ENCODE measurements at regions of chr11 and their contacts with region 1.

Region 1: GRCh38 chr11:129853518-129854236 is 38.0 kb downstream of the TMEM45B start:
- DNase-seq: peak; percentile 37 to 92 (median 82)
- ATAC-seq: peak; percentile 92 to 95
- H3K4me3 Mint-ChIP-seq: peak overlapping the region in 9 of 10 donors; percentile 64 to 82 (median 75)
- H3K27ac Mint-ChIP-seq: peak overlapping the region; percentile 63 to 99 (median 96)
- H3K4me1 Mint-ChIP-seq: peaks cover 17 to 37% (median 32%) of the 10 kb centered on the region in 4 donors
- H3K27me3 Mint-ChIP-seq: no peaks in the 10 kb centered on the region

Region 2: GRCh38 chr11:129803533-129803932 is 50.1 kb before region 1 on chr11:
- POLR2A ChIA-PET with region 1: interaction called, 29 read pairs
- DNase-seq: no peak
- ATAC-seq: no peak
- H3K4me3 Mint-ChIP-seq: peak overlapping the region; percentile 29 to 77 (median 70)
- H3K27ac Mint-ChIP-seq: peak overlapping the region; percentile 73 to 91 (median 82)
- H3K4me1 Mint-ChIP-seq: peaks cover 34 to 56% (median 45%) of the 10 kb centered on the region in 4 donors
- H3K27me3 Mint-ChIP-seq: peaks cover 0 to 10% (median 1%) of the 10 kb centered on the region in 5 donors

Region 3: DNA sequence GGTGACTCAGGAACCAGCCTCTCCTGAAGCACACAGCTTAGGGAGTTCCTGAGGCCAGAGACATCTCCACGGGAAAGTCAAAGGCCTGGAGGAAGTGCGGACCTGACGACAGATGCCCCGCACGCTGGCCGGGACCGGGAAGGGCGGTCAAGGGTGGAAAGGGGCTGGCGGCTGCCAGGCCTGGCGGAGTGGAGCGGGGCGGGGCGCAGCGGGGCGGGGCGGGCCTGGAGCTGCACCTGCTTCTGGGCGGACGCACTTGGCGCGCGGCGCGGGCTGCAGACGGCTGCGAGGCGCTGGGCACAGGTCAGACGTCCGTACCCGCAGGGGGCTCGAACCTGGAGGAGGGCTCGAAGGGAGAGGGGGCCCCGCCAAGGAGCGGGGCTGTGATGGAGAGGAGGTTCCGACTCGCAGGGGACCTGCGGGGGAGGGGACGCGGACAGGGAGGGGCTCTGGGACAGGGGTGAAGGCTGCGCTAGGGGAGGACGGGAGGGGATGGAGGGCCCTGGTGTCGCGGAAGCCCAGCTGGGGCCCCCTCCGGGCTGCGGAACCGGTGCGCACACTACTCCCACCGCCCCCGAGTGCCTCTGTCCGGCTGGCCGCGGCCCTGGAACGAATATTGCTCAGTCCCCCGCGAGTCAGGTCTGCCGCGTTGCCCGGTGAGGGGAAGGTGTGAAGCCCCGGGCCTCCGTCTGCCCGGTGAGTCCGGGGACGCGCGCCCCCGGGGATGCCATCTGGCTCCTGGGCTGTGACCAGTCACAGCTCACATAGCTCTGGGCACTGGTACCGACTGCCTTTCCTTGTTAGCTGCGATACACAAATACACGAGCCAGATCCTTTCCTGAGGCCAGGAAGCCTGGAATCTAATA is 37.8 kb before region 1 on chr11 and contains the start of gene TMEM45B:
- POLR2A ChIA-PET with region 1: interaction called, 26 read pairs
- DNase-seq: peak in 8 of 10 donors; percentile 15 to 66 (median 24)
- ATAC-seq: peak; percentile 17 to 49
- H3K4me3 Mint-ChIP-seq: peak within 1 kb of the TSS; percentile 75 to 90 (median 82)
- H3K27ac Mint-ChIP-seq: peak within 1 kb of the TSS; percentile 78 to 96 (median 90)
- H3K4me1 Mint-ChIP-seq: peaks cover 14 to 54% (median 42%) of the 10 kb centered on the region in 4 donors
- H3K27me3 Mint-ChIP-seq: peaks cover 3 to 36% (median 26%) of the 10 kb centered on the region in 5 donors
- polyA plus RNA-seq, gene TMEM45B: 0.96 to 1.7 (median 1.1) TPM